ENCODE measurements at regions of chr1 and their contacts with region 1.

Region 1: GRCh38 chr1:23044035-23044434 is 24.8 kb downstream of the KDM1A start:
- DNase-seq: no peak
- H3K4me3 ChIP-seq: no peak overlapping the region
- CTCF ChIP-seq: no peak

Region 2: DNA sequence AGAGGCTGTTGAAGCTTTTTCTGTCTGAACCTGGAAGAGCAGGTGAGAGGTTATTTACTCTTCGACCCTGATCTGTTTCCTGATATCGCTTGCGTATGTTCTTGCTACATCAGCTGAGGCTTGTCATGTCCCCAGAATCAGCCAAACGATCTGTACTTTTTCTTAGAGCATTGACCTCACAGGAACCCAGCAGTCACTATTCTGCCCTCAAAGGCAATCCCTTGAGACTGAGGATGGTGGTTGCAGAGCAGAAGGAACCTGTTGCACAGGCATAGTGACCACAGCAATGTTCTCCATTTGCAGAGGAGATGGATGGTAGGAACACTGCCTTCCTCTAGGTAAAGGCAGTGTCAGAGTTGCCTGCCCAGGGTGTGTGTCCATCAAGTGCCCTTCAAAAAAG is 60.1 kb before region 1 on chr1:
- in situ Hi-C with region 1: loop called (anchors 5 kb)
- DNase-seq: no peak
- H3K4me3 ChIP-seq: no peak overlapping the region
- CTCF ChIP-seq: no peak

Region 3: DNA sequence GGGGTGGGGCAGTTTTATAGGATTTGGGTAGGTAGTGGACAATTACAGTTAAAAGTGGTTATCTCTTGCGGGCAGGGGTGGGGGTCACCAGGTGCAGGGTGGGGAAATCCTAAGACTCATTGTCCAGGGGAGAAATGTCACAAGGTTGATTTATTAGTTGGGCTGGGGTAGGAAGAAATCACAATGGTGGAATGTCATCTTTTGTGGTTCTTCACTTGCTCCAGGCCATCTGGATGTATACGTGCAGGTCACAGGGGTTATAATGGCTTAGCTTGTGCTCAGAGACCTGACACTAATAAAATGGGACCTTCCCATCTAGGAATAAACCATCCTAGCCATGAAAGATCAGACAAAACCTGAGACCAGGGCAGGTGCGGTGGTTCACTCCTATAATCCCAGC is 39.9 kb before region 1 on chr1:
- in situ Hi-C with region 1: no loop called
- DNase-seq: no peak
- H3K4me3 ChIP-seq: no peak overlapping the region
- CTCF ChIP-seq: no peak

Region 4: GRCh38 chr1:23122023-23122748 is 78.2 kb after region 1 on chr1:
- in situ Hi-C with region 1: no loop called
- DNase-seq: peak; percentile 50
- H3K4me3 ChIP-seq: no peak overlapping the region
- CTCF ChIP-seq: no peak

Measured in astrocyte of the cerebellum (primary cell).